MCF 10A (cell line): ENCODE measurements at regions of chr10 and their contacts with region 1.

Region 1: GRCh38 chr10:80144067-80144695 is 11.7 kb downstream of the PLAC9 start:
- DNase-seq: peak; percentile 36
- H3K4me3 Mint-ChIP-seq: no peak overlapping the region
- H3K27ac Mint-ChIP-seq: no peak overlapping the region
- H3K4me1 Mint-ChIP-seq: peaks cover 16% of the 10 kb centered on the region
- H3K27me3 Mint-ChIP-seq: no peaks in the 10 kb centered on the region
- CTCF ChIP-seq: no peak

Region 2: GRCh38 chr10:80015911-80016830 is 128.0 kb before region 1 on chr10:
- CTCF ChIA-PET with region 1: no interaction called
- POLR2A ChIA-PET with region 1: no interaction called
- intact Hi-C with region 1: no loop called
- DNase-seq: no peak
- H3K4me3 Mint-ChIP-seq: no peak overlapping the region
- H3K27ac Mint-ChIP-seq: no peak overlapping the region
- H3K4me1 Mint-ChIP-seq: no peaks in the 10 kb centered on the region
- H3K27me3 Mint-ChIP-seq: no peaks in the 10 kb centered on the region
- CTCF ChIP-seq: no peak

Region 3: DNA sequence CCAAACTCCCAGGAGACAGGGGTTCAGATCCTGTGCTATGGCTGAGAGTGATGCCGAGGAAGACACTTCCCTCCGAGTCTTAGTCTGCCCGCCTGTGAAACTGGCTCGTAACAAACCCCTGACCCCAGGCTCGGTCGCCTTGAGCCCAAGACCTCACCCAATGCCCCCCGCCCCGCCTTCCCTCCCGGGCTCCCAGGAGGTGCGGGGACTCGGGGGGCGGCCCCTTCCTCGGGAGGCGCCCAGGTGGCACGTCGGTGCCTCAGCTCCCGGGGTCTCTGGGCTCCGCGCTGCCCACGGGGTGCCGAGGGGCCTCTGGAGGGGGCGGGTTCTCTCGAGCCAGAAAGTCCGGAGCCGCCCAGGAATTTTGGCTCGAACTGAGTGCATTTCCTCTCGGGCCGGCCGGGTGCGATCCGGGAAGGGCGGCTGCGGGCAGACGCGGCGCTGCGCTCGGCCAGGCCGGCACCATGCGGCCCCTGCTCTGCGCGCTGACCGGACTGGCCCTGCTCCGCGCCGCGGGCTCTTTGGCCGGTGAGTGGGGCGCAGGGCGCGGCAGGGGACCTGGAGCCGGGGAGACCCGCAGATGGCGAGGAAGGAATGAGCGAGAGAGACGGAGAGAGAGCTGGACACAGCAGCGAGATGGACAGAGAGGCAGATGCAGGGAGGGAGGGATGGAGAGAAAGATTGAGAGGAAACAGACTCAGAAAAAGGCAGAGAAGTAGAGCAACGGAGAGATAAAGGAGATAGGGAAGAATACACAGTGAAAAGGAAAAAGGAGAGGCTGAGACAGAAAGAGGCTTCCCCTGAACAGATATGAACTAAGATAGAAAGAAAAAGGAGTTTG is 11.7 kb before region 1 on chr10 and contains the start of gene PLAC9:
- CTCF ChIA-PET with region 1: interaction called, 12 read pairs
- POLR2A ChIA-PET with region 1: interaction called, 3 read pairs
- intact Hi-C with region 1: no loop called
- DNase-seq: no peak
- H3K4me3 Mint-ChIP-seq: peak within 1 kb of the TSS; percentile 17
- H3K27ac Mint-ChIP-seq: no peak within 1 kb of the TSS
- H3K4me1 Mint-ChIP-seq: peaks cover 11% of the 10 kb centered on the region
- H3K27me3 Mint-ChIP-seq: peaks cover 14% of the 10 kb centered on the region
- CTCF ChIP-seq: no peak
- total RNA-seq, gene PLAC9: 0.93 and 1.0 TPM in 2 replicates

Region 4: GRCh38 chr10:80158598-80159127 is 14.5 kb after region 1 on chr10:
- CTCF ChIA-PET with region 1: interaction called, 11 read pairs
- POLR2A ChIA-PET with region 1: interaction called, 7 read pairs
- intact Hi-C with region 1: no loop called
- DNase-seq: peak; percentile 98
- H3K4me3 Mint-ChIP-seq: no peak overlapping the region
- H3K27ac Mint-ChIP-seq: peak overlapping the region; percentile 55
- H3K4me1 Mint-ChIP-seq: peaks cover 58% of the 10 kb centered on the region
- H3K27me3 Mint-ChIP-seq: no peaks in the 10 kb centered on the region
- CTCF ChIP-seq: no peak

Region 5: GRCh38 chr10:80281784-80282765 is 137.9 kb after region 1 on chr10:
- CTCF ChIA-PET with region 1: no interaction called
- POLR2A ChIA-PET with region 1: no interaction called
- intact Hi-C with region 1: no loop called
- DNase-seq: no peak
- H3K4me3 Mint-ChIP-seq: no peak overlapping the region
- H3K27ac Mint-ChIP-seq: no peak overlapping the region
- H3K4me1 Mint-ChIP-seq: peaks cover 12% of the 10 kb centered on the region
- H3K27me3 Mint-ChIP-seq: no peaks in the 10 kb centered on the region
- CTCF ChIP-seq: no peak